ENCODE measurements at regions of chr13 and their contacts with region 1.

Region 1: GRCh38 chr13:99162962-99163361 is 37.7 kb upstream of the UBAC2 start:
- DNase-seq: no peak
- ATAC-seq: no peak
- H3K4me3 ChIP-seq: no peak overlapping the region
- H3K27ac ChIP-seq: no peak overlapping the region
- H3K4me1 ChIP-seq: no peaks in the 10 kb centered on the region
- H3K27me3 ChIP-seq: no peaks in the 10 kb centered on the region
- CTCF ChIP-seq: no peak

Region 2: DNA sequence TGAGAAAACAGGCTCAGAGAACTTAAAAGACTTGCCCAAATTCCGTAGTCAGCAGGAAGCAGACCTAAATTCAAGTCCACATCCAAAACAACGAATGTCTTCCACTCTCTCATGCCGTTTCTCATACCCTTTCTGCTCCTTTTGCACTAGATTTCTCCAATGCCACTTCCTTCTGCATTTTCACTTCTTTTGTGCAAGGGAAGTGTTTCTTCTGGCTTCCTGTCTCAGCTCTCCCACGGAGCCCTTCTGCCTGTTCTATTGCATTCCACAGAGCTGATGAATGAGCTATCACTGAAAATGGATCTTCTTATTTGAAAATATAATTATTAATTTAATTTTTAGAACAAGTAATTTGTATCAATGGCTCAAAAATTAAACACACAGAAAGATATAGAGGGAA is 530.0 kb before region 1 on chr13:
- CTCF ChIA-PET with region 1: interaction called, 14 read pairs
- POLR2A ChIA-PET with region 1: no interaction called
- intact Hi-C with region 1: no loop called
- DNase-seq: peak; percentile 40
- ATAC-seq: no peak
- H3K4me3 ChIP-seq: no peak overlapping the region
- H3K27ac ChIP-seq: no peak overlapping the region
- H3K4me1 ChIP-seq: peaks cover 3% of the 10 kb centered on the region; the same call in 1 of the 2 replicates
- H3K27me3 ChIP-seq: no peaks in the 10 kb centered on the region
- CTCF ChIP-seq: no peak

Measured in PC-3 (cell line).